ENCODE measurements at regions of chr13 and their contacts with region 1.

Region 1: GRCh38 chr13:99356158-99357091 is 49.2 kb upstream of the GPR183 start:
- DNase-seq: peak; percentile 48
- ATAC-seq: peak; percentile 25
- H3K4me3 Mint-ChIP-seq: peak overlapping the region; percentile 42
- H3K27ac Mint-ChIP-seq: peak overlapping the region; percentile 92
- H3K4me1 Mint-ChIP-seq: peaks cover 99% of the 10 kb centered on the region
- H3K27me3 Mint-ChIP-seq: no peaks in the 10 kb centered on the region

Region 2: DNA sequence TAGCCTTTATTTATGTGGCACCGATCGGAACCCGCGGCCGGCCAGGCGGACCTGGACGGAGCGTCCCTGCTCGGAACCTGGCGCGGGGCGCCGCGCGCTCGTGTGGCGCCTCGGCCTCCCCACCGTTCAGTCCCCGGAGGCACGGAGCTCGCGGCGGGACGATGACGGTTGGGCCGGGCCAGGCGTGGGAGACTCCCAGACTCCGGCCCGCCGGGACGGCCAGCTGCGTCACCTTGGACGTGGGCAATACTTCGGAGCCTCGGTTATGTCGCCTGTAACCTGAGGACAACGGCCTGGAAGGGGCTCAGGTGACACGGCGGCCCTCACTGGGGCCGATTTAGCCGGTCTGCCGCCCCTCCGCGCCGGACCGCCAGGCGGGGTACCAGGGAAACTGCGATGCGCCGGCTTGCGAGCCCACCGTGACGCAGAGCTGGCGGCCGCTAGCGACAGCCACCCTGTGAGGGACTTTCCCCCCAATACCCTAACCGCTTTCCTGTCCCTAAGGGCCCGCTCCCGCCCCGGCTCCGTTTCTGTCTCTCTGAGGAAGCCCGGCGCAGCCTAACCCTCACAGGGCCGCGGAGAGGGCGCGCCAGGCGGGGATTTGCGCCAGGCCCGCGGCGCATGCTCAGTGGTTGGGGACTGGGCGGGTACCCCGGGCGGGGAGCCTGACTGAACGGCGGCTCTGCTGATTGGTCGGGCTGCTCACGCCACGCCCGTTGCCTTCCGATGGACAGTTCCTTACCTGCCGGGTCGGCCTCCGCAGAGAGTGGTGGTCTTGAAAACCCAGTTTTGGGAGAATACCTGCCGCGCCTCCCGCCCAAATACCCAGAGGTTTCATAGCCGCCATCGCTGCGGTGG is 269.1 kb before region 1 on chr13:
- CTCF ChIA-PET with region 1: no interaction called
- POLR2A ChIA-PET with region 1: no interaction called
- intact Hi-C with region 1: loop called in 1 of 2 experiments (anchors 5 kb)
- DNase-seq: peak; percentile 96
- ATAC-seq: peak; percentile 89
- H3K4me3 Mint-ChIP-seq: peak overlapping the region; percentile 89
- H3K27ac Mint-ChIP-seq: peak overlapping the region; percentile 95
- H3K4me1 Mint-ChIP-seq: peaks cover 31% of the 10 kb centered on the region
- H3K27me3 Mint-ChIP-seq: no peaks in the 10 kb centered on the region

Region 3: GRCh38 chr13:99296398-99296797 is 60.0 kb before region 1 on chr13:
- CTCF ChIA-PET with region 1: interaction called, 14 read pairs
- POLR2A ChIA-PET with region 1: interaction called, 6 read pairs
- intact Hi-C with region 1: loop called (anchors 1 kb)
- DNase-seq: no peak
- ATAC-seq: peak; percentile 54
- H3K4me3 Mint-ChIP-seq: peak overlapping the region; percentile 58
- H3K27ac Mint-ChIP-seq: peak overlapping the region; percentile 96
- H3K4me1 Mint-ChIP-seq: peaks cover 86% of the 10 kb centered on the region
- H3K27me3 Mint-ChIP-seq: no peaks in the 10 kb centered on the region

Region 4: GRCh38 chr13:99314640-99315176 is 41.7 kb before region 1 on chr13:
- CTCF ChIA-PET with region 1: interaction called, 21 read pairs
- POLR2A ChIA-PET with region 1: interaction called, 23 read pairs
- intact Hi-C with region 1: loop called (anchors 1 to 2 kb)
- DNase-seq: peak; percentile 85
- ATAC-seq: peak; percentile 76
- H3K4me3 Mint-ChIP-seq: peak overlapping the region; percentile 60
- H3K27ac Mint-ChIP-seq: peak overlapping the region; percentile 96
- H3K4me1 Mint-ChIP-seq: peaks cover 88% of the 10 kb centered on the region
- H3K27me3 Mint-ChIP-seq: no peaks in the 10 kb centered on the region

Region 5: DNA sequence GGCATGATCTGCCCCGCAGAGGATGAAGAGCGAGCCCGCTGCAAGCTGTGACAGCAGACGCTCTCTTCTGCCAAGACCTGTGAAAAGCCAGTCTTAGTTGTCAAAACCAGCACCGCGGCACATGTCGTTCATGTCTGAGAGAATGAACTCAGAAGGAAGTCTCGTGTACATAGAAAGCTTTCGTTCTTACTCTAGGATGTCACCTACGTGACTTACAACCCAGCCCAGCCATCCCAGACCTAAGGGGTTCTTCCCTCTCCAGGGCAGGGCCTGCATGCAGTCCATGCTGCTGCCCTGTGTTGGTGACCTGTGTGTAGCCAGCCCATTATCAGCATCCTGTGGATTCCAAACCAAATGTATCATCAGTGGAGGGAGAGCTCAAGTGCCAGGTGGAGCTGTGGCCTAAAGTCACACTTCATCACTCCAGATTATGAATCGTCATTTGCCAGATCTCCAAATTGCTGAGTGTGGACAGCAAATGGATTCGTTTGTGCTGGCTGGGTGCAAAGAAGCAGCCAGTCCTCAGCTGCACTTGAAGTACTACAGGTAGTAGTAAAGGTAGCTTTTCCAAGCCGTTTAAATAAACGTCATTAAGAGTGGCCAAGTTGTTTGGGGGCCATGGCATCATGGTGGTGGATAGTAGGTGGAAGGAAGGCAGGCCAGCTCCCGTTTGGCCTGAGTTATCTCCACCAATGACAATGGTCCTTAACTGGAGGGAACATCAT is 24.7 kb after region 1 on chr13:
- CTCF ChIA-PET with region 1: interaction called, 18 read pairs
- POLR2A ChIA-PET with region 1: interaction called, 16 read pairs
- intact Hi-C with region 1: loop called (anchors 1 kb)
- DNase-seq: peak; percentile 89
- ATAC-seq: peak; percentile 78
- H3K4me3 Mint-ChIP-seq: no peak overlapping the region
- H3K27ac Mint-ChIP-seq: peak overlapping the region; percentile 96
- H3K4me1 Mint-ChIP-seq: peaks cover 89% of the 10 kb centered on the region
- H3K27me3 Mint-ChIP-seq: no peaks in the 10 kb centered on the region

Region 6: GRCh38 chr13:99995589-99996380 is 639.4 kb after region 1 on chr13:
- CTCF ChIA-PET with region 1: no interaction called
- POLR2A ChIA-PET with region 1: no interaction called
- intact Hi-C with region 1: no loop called
- DNase-seq: peak; percentile 7
- ATAC-seq: no peak
- H3K4me3 Mint-ChIP-seq: no peak overlapping the region
- H3K27ac Mint-ChIP-seq: no peak overlapping the region
- H3K4me1 Mint-ChIP-seq: peaks cover 14% of the 10 kb centered on the region
- H3K27me3 Mint-ChIP-seq: peaks cover 74% of the 10 kb centered on the region

Region 7: DNA sequence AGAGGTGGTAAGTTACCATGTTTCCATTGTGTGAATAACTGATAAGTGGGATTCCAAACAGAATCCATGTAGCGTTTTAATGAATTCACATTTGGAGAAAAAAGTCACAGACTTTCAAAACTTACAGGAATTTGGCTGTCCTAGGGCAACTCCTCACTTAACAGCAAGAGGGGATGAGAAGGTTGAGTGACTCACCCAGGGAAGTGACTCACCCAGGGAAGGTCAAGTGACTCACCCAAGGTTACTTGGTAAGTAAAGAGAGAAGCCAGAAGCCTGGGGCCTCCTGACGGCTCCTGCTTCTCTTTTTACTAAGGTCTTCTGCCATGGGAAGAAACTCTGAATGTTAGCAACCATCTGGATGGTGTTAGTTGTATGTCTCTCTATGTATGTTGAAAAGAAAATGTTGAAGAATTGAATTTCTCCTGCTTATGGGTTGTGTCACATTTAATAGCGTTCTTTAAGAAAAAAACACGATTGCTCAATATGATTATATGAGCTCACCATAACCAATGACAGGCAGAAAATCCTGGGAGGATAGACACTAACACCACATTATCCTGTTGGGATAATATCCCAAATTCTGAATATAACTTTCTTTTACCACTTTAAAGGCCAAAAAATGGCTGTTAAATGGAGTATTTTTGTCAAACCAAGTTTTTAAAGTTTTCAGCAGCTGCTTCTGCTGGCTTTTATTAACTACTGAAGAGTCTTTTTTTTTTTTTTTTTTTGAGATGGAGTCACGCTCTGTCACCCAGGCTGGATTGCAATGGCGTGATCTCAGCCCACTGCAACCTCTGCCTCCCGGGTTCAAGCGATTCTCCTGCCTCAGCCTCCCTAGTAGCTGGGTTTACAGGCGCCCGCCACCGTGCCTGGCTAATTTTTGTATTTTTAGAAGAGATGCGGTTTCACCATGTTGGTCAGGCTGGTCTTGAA is 1036.5 kb after region 1 on chr13:
- CTCF ChIA-PET with region 1: no interaction called
- POLR2A ChIA-PET with region 1: no interaction called
- intact Hi-C with region 1: loop called in 1 of 2 experiments (anchors 2 kb)
- DNase-seq: peak; percentile 85
- ATAC-seq: peak; percentile 80
- H3K4me3 Mint-ChIP-seq: no peak overlapping the region
- H3K27ac Mint-ChIP-seq: peak overlapping the region; percentile 59
- H3K4me1 Mint-ChIP-seq: peaks cover 31% of the 10 kb centered on the region
- H3K27me3 Mint-ChIP-seq: no peaks in the 10 kb centered on the region